ENCODE measurements at regions of chr15 and their contacts with region 1.

Region 1: DNA sequence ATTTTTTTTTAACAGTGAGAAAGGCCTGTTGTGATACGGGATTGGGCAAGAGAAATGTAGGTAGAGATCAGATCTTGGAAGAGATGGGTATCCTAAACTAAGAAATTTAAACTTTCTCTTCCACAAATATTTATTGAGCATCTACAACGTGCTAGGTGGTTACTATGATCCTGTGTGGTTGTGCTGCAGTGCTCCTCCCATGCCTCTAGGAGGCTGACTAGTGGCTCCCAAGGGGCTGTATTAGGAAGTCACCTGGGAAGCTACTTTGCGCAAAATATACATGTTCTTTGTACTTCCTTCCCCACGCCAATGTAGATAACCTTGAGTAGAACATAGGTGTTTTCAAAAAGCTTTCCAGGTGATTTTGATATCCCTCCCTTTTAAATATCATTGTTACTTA is 27.2 kb downstream of the USP3 start:
- DNase-seq: no peak
- ATAC-seq: no peak
- H3K4me3 ChIP-seq: no peak overlapping the region
- H3K27ac ChIP-seq: no peak overlapping the region
- H3K4me1 ChIP-seq: no peaks in the 10 kb centered on the region
- H3K27me3 ChIP-seq: no peaks in the 10 kb centered on the region
- CTCF ChIP-seq: no peak

Region 2: DNA sequence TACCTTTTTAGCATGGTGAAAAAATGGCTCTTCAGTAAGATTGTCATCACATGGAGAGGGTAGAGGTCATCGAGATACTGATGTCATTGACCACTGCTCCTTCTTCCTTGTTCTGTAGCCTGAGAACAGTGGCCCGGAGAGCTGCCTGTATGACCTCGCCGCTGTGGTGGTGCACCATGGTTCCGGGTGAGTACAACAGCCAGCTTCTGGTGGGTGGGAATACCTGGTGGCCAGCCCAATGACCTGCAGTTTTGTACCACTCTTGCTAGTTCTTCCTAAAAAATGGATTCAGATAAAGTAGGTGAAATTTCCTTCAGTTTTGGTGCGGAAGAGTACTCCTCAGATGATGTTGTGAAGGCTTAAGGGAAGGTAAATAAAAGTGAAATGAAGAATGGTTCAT is 57.2 kb after region 1 on chr15:
- intact Hi-C with region 1: loop called in 1 of 2 experiments (anchors 2 kb)
- DNase-seq: no peak
- ATAC-seq: no peak
- H3K4me3 ChIP-seq: no peak overlapping the region
- H3K27ac ChIP-seq: no peak overlapping the region
- H3K4me1 ChIP-seq: no peaks in the 10 kb centered on the region
- H3K27me3 ChIP-seq: no peaks in the 10 kb centered on the region
- CTCF ChIP-seq: no peak

Measured in psoas muscle (tissue), 8 donors.